Activated T-helper 2 cell treated with anti-CD3 and anti-CD28 coated beads, Interferon-gamma antibody, Interleukin-2, Interleukin-4, amounts not matched to agents 10 μg/mL and 5 μg/mL and 100 μg/mL, durations not matched to agents 14 hours and 24 hours and 36 hours (primary cell): ENCODE measurements at regions of chr3 and their contacts with region 1.

Region 1: DNA sequence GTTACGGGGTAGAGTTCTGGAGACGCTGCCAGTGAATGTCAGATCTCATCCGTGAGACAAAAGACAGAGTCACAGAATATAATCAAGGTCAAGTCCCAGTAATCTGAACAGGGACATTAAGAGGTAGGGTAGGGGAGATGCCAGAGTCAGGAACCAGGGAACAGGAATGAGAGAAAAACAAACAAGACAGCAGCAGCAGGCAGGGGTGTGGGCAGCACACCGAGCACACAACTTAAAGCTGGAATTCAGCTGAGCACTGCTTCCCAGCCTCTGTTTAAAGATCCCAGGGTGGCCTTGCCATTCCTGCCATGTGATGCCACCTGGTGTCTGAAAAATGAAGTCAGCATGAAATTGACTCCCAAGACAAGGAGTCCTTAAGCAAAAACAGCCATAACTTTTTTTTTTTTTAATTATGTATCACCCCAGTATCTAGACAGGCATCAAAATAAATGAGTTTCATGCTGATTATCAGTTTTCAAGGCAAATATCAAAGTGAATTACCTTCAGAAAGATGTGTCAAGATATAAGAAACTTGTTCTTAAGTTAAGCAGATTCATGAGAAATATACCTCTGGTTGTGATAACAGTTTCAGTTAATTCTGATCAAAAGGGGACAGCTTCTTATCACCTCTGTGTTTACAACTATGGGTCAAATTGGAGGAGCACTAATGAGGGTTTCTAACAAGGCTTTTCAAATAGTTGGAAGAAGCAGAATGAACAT is 203.7 kb downstream of the SLC9A9 start:
- DNase-seq: no peak
- H3K4me3 Mint-ChIP-seq: no peak overlapping the region
- H3K27ac Mint-ChIP-seq: no peak overlapping the region
- H3K4me1 Mint-ChIP-seq: no peaks in the 10 kb centered on the region
- H3K27me3 Mint-ChIP-seq: no peaks in the 10 kb centered on the region

Region 2: GRCh38 chr3:143433787-143434378 is 210.6 kb before region 1 on chr3:
- intact Hi-C with region 1: loop called (anchors 1 kb)
- DNase-seq: no peak
- H3K4me3 Mint-ChIP-seq: no peak overlapping the region
- H3K27ac Mint-ChIP-seq: no peak overlapping the region
- H3K4me1 Mint-ChIP-seq: no peaks in the 10 kb centered on the region
- H3K27me3 Mint-ChIP-seq: no peaks in the 10 kb centered on the region

Region 3: DNA sequence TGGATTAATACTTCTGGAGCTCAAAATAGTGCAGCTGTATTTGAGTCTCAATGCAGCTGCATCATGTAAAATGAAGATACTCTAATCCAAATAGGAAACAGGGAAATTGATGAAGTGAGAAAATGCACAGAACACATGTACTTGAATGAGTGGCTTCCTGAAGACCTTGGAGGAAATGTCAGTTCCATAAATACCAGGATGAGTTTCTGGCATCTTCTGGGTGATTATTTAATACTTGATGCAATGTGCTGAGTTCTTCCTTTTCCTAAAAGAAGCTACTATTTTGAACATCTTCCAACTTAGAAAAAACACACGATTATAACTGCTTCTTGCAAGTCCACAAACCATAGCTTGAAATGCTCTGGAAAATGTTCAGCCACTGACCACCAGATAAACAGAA is 41.0 kb after region 1 on chr3:
- intact Hi-C with region 1: no loop called
- DNase-seq: no peak
- H3K4me3 Mint-ChIP-seq: no peak overlapping the region
- H3K27ac Mint-ChIP-seq: no peak overlapping the region
- H3K4me1 Mint-ChIP-seq: no peaks in the 10 kb centered on the region
- H3K27me3 Mint-ChIP-seq: peaks cover 5% of the 10 kb centered on the region